CD14-positive monocyte (primary cell): ENCODE measurements at regions of chr3 and their contacts with region 1.

Region 1: DNA sequence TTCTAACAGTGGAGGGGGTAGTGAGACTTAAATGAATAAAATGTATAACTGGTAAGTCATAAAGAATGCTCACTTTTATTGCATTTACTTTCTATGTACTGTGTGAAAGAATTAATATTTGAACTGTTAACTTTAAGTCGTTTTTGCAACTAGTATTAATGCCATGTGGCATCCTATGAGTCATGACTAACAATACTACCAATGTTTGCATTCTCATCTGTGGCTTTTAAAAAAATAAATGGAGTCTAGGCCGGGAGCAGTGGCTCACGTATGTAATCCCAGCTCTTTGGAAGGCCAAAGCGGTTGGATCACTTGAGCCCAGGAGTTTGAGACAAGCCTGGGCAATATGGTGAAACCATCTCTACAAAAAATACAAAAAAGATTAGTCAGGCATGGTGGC is 5.2 kb downstream of the C3orf49 start:
- DNase-seq: no peak
- H3K4me3 ChIP-seq: no peak overlapping the region
- H3K4me3 Mint-ChIP-seq: no peak overlapping the region
- H3K27ac ChIP-seq: no peak overlapping the region
- H3K27ac Mint-ChIP-seq: no peak overlapping the region
- H3K4me1 ChIP-seq: no peaks in the 10 kb centered on the region
- H3K4me1 Mint-ChIP-seq: no peaks in the 10 kb centered on the region
- H3K27me3 ChIP-seq: no peaks in the 10 kb centered on the region
- H3K27me3 Mint-ChIP-seq: no peaks in the 10 kb centered on the region
- CTCF ChIP-seq: no peak

Region 2: GRCh38 chr3:62201438-62202035 is 1622.8 kb before region 1 on chr3:
- intact Hi-C with region 1: loop called in 1 of 2 experiments (anchors 10 kb)
- DNase-seq: no peak
- H3K4me3 ChIP-seq: no peak overlapping the region
- H3K4me3 Mint-ChIP-seq: no peak overlapping the region
- H3K27ac ChIP-seq: no peak overlapping the region
- H3K27ac Mint-ChIP-seq: no peak overlapping the region
- H3K4me1 ChIP-seq: no peaks in the 10 kb centered on the region
- H3K4me1 Mint-ChIP-seq: no peaks in the 10 kb centered on the region
- H3K27me3 ChIP-seq: no peaks in the 10 kb centered on the region
- H3K27me3 Mint-ChIP-seq: peaks cover 0 to 6% (median 3%) of the 10 kb centered on the region in 3 donors
- CTCF ChIP-seq: peak; percentile 38